GM13977 (cell line): ENCODE measurements at regions of chr15 and their contacts with region 1.

Region 1: DNA sequence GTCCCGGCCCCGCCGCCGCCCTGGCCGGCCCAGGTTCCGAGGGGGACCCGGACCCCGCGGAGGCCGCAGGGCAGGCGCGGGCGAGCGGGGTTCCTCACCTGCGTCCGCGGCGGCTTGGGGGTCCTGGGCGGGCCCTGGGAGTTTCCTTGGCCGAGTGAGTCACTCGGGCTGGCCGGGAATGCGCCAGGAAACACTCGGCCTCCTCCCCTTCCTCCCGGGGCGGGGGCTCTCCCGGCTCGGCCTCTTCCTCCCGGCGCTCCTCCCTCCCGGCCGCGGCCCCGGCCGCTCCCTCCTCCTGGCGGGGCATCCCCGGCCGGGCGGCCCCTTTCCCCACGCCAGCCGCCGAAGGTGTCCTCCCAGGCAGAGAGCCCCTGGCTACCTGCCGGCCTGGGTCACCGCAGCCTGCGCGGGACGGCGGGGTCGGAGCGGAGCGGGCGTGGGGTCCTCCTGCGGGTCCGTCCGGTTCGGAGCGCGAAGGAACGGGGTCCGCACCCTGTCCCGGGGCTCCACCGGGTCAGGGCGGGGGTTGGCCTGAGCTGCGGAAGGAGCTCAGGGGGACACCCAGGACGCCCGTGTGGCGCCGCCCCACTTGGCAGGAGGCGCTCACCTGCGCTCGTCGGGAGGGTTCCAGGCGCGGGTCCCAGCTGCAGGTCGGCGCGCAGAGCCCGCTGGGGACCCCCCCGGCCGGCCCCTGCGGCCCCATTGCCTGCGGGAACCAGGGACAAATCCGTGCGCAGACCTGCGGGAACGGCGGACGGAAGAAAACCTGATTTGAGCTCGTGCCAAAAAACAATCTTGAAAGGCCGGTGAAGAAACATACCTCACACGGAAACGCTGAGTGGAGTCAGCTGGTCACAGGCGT is at the start of gene CYFIP1:
- DNase-seq: peak; percentile 90
- CTCF ChIP-seq: no peak

Region 2: DNA sequence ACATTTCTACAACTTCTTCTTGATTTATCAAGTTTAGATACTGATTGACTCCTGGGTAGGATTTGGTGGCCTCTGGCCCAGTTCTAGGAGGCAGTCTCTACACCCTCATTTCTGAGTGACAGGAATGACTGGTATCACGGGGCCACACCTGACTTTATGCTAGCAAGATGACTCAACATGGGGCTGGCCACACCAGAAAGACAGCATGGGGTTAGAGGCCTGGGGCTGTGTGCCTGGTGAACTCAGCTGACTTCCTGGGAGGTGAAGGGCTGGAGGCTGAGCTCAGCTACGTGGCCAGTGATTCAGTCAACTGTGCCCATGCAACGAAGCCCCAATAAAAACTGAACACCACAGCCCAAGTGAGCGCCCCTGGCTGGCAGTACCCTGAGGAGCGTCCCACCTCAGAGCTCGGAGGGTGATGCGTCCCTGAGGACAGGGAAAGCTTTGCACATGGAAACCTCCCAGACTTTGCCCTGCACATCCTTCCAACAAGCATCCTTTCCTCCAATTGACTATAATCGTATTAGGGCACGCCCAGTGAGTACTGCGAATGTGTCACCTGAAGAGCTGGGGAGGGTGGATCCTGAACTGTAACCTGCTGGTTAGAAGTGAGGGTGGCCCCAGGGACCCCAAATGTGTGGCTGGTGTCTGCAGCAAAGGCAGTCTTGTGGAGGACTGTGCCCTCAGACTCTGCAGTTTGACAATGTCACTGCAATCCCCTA is 84.8 kb before region 1 on chr15:
- in situ Hi-C with region 1: loop called (anchors 25 kb)
- DNase-seq: peak; percentile 66
- CTCF ChIP-seq: no peak